Activated naive CD8-positive, alpha-beta T cell treated with anti-CD3 and anti-CD28 coated beads, Interleukin-2, amount 10 ng/mL, durations not matched to agents 7 days and 5 days (primary cell): ENCODE measurements at regions of chr18 and their contacts with region 1.

Region 1: DNA sequence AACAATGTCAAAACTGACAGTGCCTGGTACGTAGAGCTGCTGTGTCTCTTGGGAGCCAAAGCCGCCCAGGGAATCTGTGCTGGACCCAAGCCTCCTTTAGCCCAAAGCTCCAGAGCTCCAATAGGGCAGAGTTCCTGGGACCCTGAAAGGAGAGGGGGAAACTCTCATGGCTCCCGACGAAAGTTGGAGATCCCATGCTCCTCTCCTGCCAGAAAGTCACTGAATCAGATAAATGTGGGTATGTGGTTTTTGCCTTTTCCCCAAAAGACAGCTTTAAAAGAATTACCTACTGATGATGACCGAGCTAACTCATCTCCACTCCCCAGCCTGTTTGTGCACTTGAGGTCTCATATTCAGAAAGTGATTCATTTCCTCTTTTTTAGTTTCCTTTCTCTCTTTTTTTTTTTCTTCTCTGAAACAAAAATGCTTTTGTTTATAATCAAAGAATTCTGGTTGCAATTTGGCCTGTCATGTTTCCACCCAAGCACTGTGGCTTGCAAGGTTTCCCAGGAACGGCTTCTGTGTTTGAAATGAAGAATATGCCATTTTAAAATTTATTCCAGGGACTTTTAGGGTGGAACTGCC is 14.1 kb upstream of the PMAIP1 start:
- DNase-seq: no peak
- ATAC-seq: peak; percentile 70
- H3K4me3 Mint-ChIP-seq: peak overlapping the region; percentile 23
- H3K27ac Mint-ChIP-seq: peak overlapping the region; percentile 3
- H3K4me1 Mint-ChIP-seq: peaks cover 35% of the 10 kb centered on the region
- H3K27me3 Mint-ChIP-seq: peaks cover 2% of the 10 kb centered on the region

Region 2: GRCh38 chr18:59864147-59864641 is 21.5 kb before region 1 on chr18:
- POLR2A ChIA-PET with region 1: no interaction called
- DNase-seq: no peak
- ATAC-seq: no peak
- H3K4me3 Mint-ChIP-seq: no peak overlapping the region
- H3K27ac Mint-ChIP-seq: no peak overlapping the region
- H3K4me1 Mint-ChIP-seq: no peaks in the 10 kb centered on the region
- H3K27me3 Mint-ChIP-seq: peaks cover 14% of the 10 kb centered on the region

Region 3: GRCh38 chr18:59899298-59900221 is 13.9 kb after region 1 on chr18 and contains the start of gene PMAIP1:
- POLR2A ChIA-PET with region 1: interaction called, 52 read pairs
- DNase-seq: peak; percentile 88
- ATAC-seq: peak; percentile 82
- H3K4me3 Mint-ChIP-seq: peak within 1 kb of the TSS; percentile 99
- H3K27ac Mint-ChIP-seq: peak within 1 kb of the TSS; percentile 99
- H3K4me1 Mint-ChIP-seq: peaks cover 32% of the 10 kb centered on the region
- H3K27me3 Mint-ChIP-seq: no peaks in the 10 kb centered on the region
- total RNA-seq, gene PMAIP1: 25.3 to 26.7 TPM

Region 4: DNA sequence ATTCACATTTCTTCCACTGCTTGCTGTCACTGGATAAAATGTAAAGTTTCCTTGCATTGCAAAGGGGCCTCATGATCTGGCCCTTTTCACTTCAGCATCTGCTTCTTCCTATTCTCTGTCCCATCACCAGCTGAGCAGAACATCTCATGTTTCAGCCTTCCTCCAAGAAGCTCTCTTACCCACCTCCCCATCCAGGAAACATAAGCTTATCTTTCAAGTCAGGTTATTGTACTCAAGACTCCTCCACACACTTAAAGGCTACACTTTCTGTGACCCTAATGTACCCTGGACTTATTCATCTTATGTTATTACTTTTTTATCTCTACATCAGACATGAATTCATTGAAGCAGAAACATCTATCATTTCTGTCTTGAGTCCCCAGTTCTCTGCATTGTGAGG is 244.6 kb after region 1 on chr18:
- POLR2A ChIA-PET with region 1: no interaction called
- DNase-seq: no peak
- ATAC-seq: no peak
- H3K4me3 Mint-ChIP-seq: no peak overlapping the region
- H3K27ac Mint-ChIP-seq: no peak overlapping the region
- H3K4me1 Mint-ChIP-seq: no peaks in the 10 kb centered on the region
- H3K27me3 Mint-ChIP-seq: no peaks in the 10 kb centered on the region